Activated CD4-positive, alpha-beta T cell treated with anti-CD3 and anti-CD28 coated beads for 36 hours (primary cell): ENCODE measurements at regions of chr3 and their contacts with region 1.

Region 1: GRCh38 chr3:44235604-44236484 is 5.8 kb upstream of the TOPAZ1 start:
- DNase-seq: peak; percentile 73
- ATAC-seq: peak; percentile 84
- H3K4me3 Mint-ChIP-seq: no peak overlapping the region
- H3K27ac Mint-ChIP-seq: no peak overlapping the region
- H3K4me1 Mint-ChIP-seq: peaks cover 6% of the 10 kb centered on the region
- H3K27me3 Mint-ChIP-seq: peaks cover 7% of the 10 kb centered on the region

Region 2: DNA sequence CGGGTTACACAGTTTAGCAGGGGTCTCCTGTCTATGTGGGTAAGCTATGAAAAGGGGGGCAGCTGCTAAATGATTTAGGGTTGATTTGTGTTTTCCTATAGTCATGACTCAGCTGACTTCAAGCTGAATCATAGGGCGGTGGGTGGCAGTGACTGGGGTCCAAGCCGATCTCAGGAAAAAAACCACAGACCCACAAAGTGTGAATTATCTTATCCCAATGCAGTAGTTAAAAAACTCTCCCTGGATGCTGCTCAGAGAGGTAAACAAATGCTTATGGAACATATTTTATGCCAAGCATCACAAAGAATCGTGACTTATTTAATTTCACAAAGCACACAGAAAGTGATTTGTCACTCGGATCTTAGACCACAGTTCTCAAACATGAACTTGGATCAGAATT is 12.5 kb before region 1 on chr3:
- CTCF ChIA-PET with region 1: interaction called, 10 read pairs
- POLR2A ChIA-PET with region 1: no interaction called
- intact Hi-C with region 1: no loop called
- DNase-seq: no peak
- ATAC-seq: no peak
- H3K4me3 Mint-ChIP-seq: no peak overlapping the region
- H3K27ac Mint-ChIP-seq: no peak overlapping the region
- H3K4me1 Mint-ChIP-seq: no peaks in the 10 kb centered on the region
- H3K27me3 Mint-ChIP-seq: peaks cover 25% of the 10 kb centered on the region

Region 3: DNA sequence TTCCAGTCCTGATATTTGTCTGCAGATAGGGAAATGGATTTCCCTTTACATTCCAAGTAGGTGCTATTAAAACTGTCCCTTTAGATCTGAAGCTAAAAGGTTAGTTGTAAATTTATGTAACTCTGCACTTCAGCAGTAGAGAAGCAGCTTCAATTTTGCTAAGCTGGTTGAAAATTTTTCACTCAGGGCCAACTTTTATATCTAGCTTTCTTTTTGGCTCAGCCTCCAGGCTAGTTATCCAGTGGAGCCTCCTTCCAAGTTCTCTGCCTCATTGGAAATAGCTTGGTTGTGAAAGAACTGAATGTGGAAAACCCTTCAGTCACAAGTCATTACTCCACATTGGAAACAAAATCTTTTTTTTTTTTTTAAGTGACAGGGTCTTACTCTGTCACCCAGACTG is 340.8 kb after region 1 on chr3:
- CTCF ChIA-PET with region 1: no interaction called
- POLR2A ChIA-PET with region 1: no interaction called
- intact Hi-C with region 1: no loop called
- DNase-seq: no peak
- ATAC-seq: no peak
- H3K4me3 Mint-ChIP-seq: no peak overlapping the region
- H3K27ac Mint-ChIP-seq: no peak overlapping the region
- H3K4me1 Mint-ChIP-seq: no peaks in the 10 kb centered on the region
- H3K27me3 Mint-ChIP-seq: peaks cover under 1% of the 10 kb centered on the region